Sigmoid colon (tissue), 7 donors: ENCODE measurements at regions of chr7 and their contacts with region 1.

Region 1: DNA sequence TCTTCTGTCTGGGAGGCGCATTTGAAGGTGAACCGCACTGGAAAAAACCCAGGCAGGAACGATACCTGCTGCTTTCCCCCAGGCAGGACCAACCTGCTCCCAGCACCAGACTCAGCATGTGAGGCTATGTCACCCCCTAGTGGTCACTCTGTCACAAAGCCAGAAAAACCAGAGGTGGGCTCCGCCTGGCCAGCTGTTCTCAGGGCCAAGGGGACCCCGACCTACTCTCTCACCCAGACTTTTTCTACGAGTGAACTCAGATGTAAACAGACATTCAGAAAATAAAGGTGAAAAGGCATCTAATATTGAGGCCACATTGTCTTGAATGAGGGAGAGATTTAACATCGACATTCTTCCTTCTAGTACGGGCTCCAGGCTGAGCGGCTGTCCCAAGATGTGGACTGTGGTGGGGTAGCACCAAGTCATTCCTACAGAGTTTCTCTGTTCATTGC is 117.3 kb downstream of the PRKAG2 start:
- DNase-seq: peak; percentile 83
- H3K4me3 ChIP-seq: no peak overlapping the region
- H3K27ac ChIP-seq: peak overlapping the region in 1 of 4 donors; percentile 91
- H3K4me1 ChIP-seq: peaks cover 0 to 50% (median 49%) of the 10 kb centered on the region in 4 donors
- H3K27me3 ChIP-seq: no peaks in the 10 kb centered on the region
- CTCF ChIP-seq: peak; percentile 58 to 95 (median 84)
- EP300 ChIP-seq: no peak
- POLR2A ChIP-seq: no peak

Region 2: GRCh38 chr7:151368136-151368571 is 391.5 kb before region 1 on chr7:
- intact Hi-C with region 1: loop called (anchors 2 kb)
- DNase-seq: peak; percentile 93
- H3K4me3 ChIP-seq: no peak overlapping the region
- H3K27ac ChIP-seq: peak overlapping the region; percentile 60 to 84 (median 80)
- H3K4me1 ChIP-seq: peaks cover 0 to 36% (median 31%) of the 10 kb centered on the region in 4 donors
- H3K27me3 ChIP-seq: no peaks in the 10 kb centered on the region
- CTCF ChIP-seq: peak; percentile 94 to 98 (median 96)
- EP300 ChIP-seq: no peak
- POLR2A ChIP-seq: no peak

Region 3: DNA sequence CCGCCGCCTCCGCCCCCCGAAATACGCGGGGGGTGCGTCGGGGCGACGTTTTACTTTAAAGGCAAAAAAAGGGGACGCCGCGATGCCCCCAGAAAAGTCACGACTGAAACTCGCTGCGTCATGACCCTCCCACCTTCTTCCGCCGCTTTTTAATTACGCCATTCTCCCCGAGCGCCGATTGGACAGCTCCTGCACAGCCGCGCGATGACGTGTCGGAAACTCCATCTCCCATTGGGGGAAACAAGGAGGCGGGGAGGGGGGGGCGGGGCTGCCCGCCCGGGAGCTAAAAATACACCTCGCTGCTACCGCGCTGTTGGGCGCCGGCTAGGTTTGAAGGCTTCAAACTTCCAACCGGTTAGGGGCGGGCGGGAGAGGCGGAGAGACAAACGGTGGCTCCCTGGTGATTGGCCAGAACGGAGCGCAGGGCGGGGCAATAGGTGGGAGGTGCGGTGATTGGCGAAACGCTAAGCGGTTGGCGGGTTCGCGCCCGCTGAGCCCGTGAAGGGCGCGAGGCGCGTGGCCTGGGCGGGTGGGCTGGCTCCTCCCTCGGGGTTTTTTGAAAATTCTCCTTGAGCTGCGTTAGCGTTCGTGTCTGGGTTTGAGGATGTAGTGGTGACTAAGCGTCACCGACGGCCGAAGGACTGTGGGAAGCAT is 239.7 kb before region 1 on chr7 and contains the start of gene RHEB:
- intact Hi-C with region 1: loop called (anchors 5 kb)
- DNase-seq: peak; percentile 100
- H3K4me3 ChIP-seq: peak within 1 kb of the TSS; percentile 72 to 93 (median 80)
- H3K27ac ChIP-seq: peak within 1 kb of the TSS; percentile 94 to 99 (median 96)
- H3K4me1 ChIP-seq: peaks cover 0 to 40% (median 36%) of the 10 kb centered on the region in 4 donors
- H3K27me3 ChIP-seq: no peaks in the 10 kb centered on the region
- CTCF ChIP-seq: no peak
- EP300 ChIP-seq: peak in 2 of 4 donors; percentile 60 to 76
- POLR2A ChIP-seq: peak; percentile 25 to 47
- total RNA-seq, gene RHEB: 121 to 162 (median 136) TPM

Region 4: GRCh38 chr7:151631968-151632749 is 127.5 kb before region 1 on chr7:
- intact Hi-C with region 1: loop called (anchors 2 kb)
- DNase-seq: peak; percentile 87
- H3K4me3 ChIP-seq: peak overlapping the region; percentile 52 to 86 (median 74)
- H3K27ac ChIP-seq: peak overlapping the region; percentile 94 to 97 (median 95)
- H3K4me1 ChIP-seq: peaks cover 0 to 48% (median 41%) of the 10 kb centered on the region in 4 donors
- H3K27me3 ChIP-seq: no peaks in the 10 kb centered on the region
- CTCF ChIP-seq: peak in 1 of 4 experiments; percentile 15
- EP300 ChIP-seq: no peak
- POLR2A ChIP-seq: no peak

Region 5: GRCh38 chr7:151863386-151864079 is 103.9 kb after region 1 on chr7:
- intact Hi-C with region 1: no loop called
- DNase-seq: no peak
- H3K4me3 ChIP-seq: no peak overlapping the region
- H3K27ac ChIP-seq: no peak overlapping the region
- H3K4me1 ChIP-seq: peaks cover 0 to 11% (median 8%) of the 10 kb centered on the region in 4 donors
- H3K27me3 ChIP-seq: no peaks in the 10 kb centered on the region
- CTCF ChIP-seq: no peak
- EP300 ChIP-seq: no peak
- POLR2A ChIP-seq: no peak

Region 6: GRCh38 chr7:152050547-152050971 is 290.9 kb after region 1 on chr7:
- intact Hi-C with region 1: no loop called
- DNase-seq: no peak
- H3K4me3 ChIP-seq: no peak overlapping the region
- H3K27ac ChIP-seq: no peak overlapping the region
- H3K4me1 ChIP-seq: peaks cover 0 to 9% (median 6%) of the 10 kb centered on the region in 4 donors
- H3K27me3 ChIP-seq: no peaks in the 10 kb centered on the region
- CTCF ChIP-seq: no peak
- EP300 ChIP-seq: no peak
- POLR2A ChIP-seq: no peak